A673 (cell line): ENCODE measurements at regions of chr2 and their contacts with region 1.

Region 1: DNA sequence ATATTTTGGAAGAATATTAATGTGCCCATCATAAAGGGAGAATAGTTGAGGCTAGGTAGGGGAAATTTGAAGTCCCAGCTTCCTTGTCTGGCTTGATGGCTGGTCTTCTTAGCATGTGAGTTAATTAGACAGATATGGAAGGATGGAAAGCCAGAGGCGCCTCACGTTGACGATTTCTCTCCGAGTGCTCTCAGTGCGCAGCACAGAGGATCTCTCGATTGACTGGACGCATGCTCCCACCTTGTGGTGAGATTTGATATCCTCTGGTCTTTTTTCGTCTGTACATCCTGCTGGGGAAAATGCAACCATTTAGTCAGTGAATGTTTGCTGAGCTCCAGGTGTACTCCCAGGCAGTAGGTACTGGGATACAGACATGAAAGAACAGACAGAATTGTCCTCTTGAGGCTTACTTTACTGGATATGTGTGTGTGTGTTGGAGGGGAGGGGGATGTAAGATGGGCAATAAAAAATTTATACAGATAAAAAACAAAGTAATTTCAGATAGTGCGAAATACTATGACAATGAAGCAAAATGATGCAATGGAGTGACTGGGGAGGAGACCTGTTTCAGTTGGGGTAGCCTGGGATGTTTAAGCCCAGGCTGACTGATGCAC is 66.9 kb upstream of the ZNG1B start:
- DNase-seq: peak; percentile 78
- H3K4me3 ChIP-seq: no peak overlapping the region
- H3K27ac ChIP-seq: no peak overlapping the region
- H3K4me1 ChIP-seq: no peaks in the 10 kb centered on the region
- H3K27me3 ChIP-seq: no peaks in the 10 kb centered on the region
- CTCF ChIP-seq: peak; percentile 64

Region 2: GRCh38 chr2:112821682-112822081 is 548.9 kb before region 1 on chr2:
- CTCF ChIA-PET with region 1: no interaction called
- POLR2A ChIA-PET with region 1: no interaction called
- intact Hi-C with region 1: no loop called
- DNase-seq: no peak
- H3K4me3 ChIP-seq: no peak overlapping the region
- H3K27ac ChIP-seq: no peak overlapping the region
- H3K4me1 ChIP-seq: no peaks in the 10 kb centered on the region
- H3K27me3 ChIP-seq: no peaks in the 10 kb centered on the region
- CTCF ChIP-seq: no peak

Region 3: GRCh38 chr2:113248997-113249770 is 121.4 kb before region 1 on chr2:
- CTCF ChIA-PET with region 1: no interaction called
- POLR2A ChIA-PET with region 1: no interaction called
- intact Hi-C with region 1: loop called (anchors 1 kb)
- DNase-seq: peak; percentile 80
- H3K4me3 ChIP-seq: no peak overlapping the region
- H3K27ac ChIP-seq: no peak overlapping the region
- H3K4me1 ChIP-seq: no peaks in the 10 kb centered on the region
- H3K27me3 ChIP-seq: no peaks in the 10 kb centered on the region
- CTCF ChIP-seq: peak; percentile 95